HEK293 (cell line): ENCODE measurements at regions of chr2 and their contacts with region 1.

Region 1: GRCh38 chr2:191150600-191151330 is at the start of gene STAT4:
- H3K4me3 ChIP-seq: peak within 1 kb of the TSS; percentile 35
- H3K27ac ChIP-seq: no peak within 1 kb of the TSS; the same call in 1 of the 2 replicates
- H3K4me1 ChIP-seq: no peaks in the 10 kb centered on the region
- CTCF ChIP-seq: no peak

Region 2: DNA sequence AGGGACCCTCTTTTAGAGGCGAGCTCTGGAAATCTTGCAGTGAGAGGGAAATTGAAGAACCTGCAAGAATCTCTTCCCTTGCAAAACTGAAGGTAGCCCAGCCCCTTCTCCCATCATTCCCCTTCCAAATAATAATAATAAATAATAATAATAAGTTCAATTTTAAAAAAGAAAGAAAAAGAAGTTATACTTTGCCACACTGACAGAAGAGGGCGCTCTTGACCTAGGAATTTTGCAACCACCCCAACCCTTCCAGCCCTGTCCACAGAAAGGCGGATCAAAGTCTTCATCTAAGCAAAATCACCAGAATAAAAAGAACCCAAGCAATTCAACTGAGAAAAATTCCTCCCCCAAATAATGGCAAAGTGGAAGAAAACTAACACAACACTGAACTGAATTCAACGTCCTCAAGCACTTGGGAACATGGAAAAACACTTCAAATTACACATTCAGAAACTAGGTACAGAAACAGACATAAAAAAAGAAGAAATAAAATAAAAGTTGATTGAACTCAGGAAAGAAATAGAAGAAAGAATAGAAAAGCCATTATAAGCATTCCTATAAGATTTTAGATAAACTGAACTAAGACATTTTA is 369.1 kb before region 1 on chr2:
- CTCF ChIA-PET with region 1: interaction called, 12 read pairs
- POLR2A ChIA-PET with region 1: interaction called, 3 read pairs
- H3K4me3 ChIP-seq: no peak overlapping the region
- H3K27ac ChIP-seq: no peak overlapping the region
- H3K4me1 ChIP-seq: peaks cover 2% of the 10 kb centered on the region; the same call in 1 of the 2 replicates
- CTCF ChIP-seq: no peak

Region 3: DNA sequence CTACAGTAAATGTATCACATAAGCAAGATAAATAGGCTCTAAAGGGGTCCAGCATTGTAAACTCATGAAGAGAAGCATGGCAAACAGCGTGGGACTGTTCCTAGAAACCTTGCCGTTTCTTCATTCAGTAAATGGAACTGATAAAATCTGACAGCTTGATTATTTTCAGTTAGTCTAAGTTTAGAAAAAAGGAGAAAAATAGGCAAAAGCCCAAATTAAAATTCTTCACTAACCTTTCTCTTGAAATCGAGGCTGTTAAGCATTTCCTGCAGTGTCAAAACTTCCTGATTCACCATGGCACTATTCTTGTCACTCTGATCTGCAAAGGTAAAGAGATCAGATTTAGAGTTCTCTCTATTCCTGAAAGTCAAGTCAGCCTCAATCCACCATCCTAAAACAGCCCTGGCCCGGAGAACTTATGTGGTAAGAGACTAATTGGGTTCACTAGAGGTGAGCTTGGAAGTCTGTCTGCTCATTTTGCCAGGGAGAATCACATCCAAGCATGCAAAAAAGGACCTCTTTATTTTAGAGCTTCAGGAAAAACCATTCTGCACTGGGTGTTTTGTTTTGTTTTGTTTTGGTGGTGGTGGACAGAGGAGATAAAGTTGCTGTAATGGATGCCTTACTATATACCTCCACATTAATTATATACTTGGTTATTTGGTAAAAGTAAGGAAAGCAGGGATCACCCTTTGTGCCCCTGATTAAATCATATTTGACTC is 84.4 kb before region 1 on chr2:
- CTCF ChIA-PET with region 1: interaction called, 12 read pairs
- POLR2A ChIA-PET with region 1: no interaction called
- H3K4me3 ChIP-seq: no peak overlapping the region
- H3K27ac ChIP-seq: 0 out of 2 replicates have a peak overlapping the region, but pooled peaks have one; percentile 32
- H3K4me1 ChIP-seq: peaks cover 13% of the 10 kb centered on the region; the same call in 1 of the 2 replicates
- CTCF ChIP-seq: no peak

Region 4: GRCh38 chr2:191128172-191128910 is 22.4 kb before region 1 on chr2:
- CTCF ChIA-PET with region 1: interaction called, 10 read pairs
- POLR2A ChIA-PET with region 1: no interaction called
- H3K4me3 ChIP-seq: no peak overlapping the region
- H3K27ac ChIP-seq: no peak overlapping the region
- H3K4me1 ChIP-seq: no peaks in the 10 kb centered on the region
- CTCF ChIP-seq: no peak

Region 5: GRCh38 chr2:191165176-191165643 is 14.4 kb after region 1 on chr2:
- CTCF ChIA-PET with region 1: interaction called, 25 read pairs
- POLR2A ChIA-PET with region 1: no interaction called
- H3K4me3 ChIP-seq: no peak overlapping the region
- H3K27ac ChIP-seq: no peak overlapping the region
- H3K4me1 ChIP-seq: peaks cover 10% of the 10 kb centered on the region; the same call in 1 of the 2 replicates
- CTCF ChIP-seq: no peak